CD8-positive, alpha-beta T cell (primary cell): ENCODE measurements at regions of chr17 and their contacts with region 1.

Region 1: DNA sequence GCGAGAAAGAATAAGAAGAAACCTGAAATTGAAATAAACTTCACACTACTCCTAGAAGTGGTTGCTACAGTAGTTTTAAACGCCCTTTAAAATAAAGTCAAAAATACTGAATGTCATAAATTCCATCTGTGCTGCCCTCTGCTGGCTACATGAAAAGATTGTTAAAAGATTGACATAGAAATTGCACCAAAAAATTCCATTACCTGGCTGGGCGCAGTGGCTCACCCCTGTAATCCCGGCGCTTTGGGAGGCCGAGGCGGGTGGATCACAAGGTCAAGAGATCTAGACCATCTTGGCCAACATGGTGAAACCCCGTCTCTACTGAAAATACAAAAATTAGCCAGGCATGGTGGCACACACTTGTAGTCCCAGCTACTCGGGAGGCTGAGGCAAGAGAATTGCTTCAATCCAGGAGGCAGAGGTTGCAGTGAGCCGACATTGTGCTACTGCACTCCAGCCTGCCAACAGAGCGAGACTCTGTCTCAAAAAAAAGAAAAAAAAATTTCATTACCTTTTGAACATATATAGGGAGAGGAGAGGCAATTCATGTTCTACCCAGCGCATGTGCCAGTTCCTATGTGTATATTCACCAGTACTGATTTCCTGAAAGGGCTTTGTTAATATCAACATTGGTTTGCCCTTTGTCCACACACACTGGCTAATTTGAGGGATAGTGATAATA is 36.5 kb downstream of the CYTH1 start:
- DNase-seq: peak in 6 of 9 experiments; percentile 40 to 80 (median 62)
- ATAC-seq: no peak
- H3K4me3 ChIP-seq: no peak overlapping the region
- H3K4me3 Mint-ChIP-seq: peak overlapping the region; percentile 63
- H3K27ac ChIP-seq: peak overlapping the region; percentile 2 to 84
- H3K27ac Mint-ChIP-seq: peak overlapping the region; percentile 91
- H3K4me1 ChIP-seq: peaks cover 95% of the 10 kb centered on the region
- H3K4me1 Mint-ChIP-seq: peaks cover 93% of the 10 kb centered on the region
- H3K27me3 ChIP-seq: no peaks in the 10 kb centered on the region
- H3K27me3 Mint-ChIP-seq: no peaks in the 10 kb centered on the region
- CTCF ChIP-seq: peak; percentile 87

Region 2: GRCh38 chr17:78723001-78723796 is 22.3 kb before region 1 on chr17:
- CTCF ChIA-PET with region 1: interaction called, 5 read pairs
- POLR2A ChIA-PET with region 1: interaction called, 11 read pairs
- intact Hi-C with region 1: no loop called
- DNase-seq: no peak
- ATAC-seq: no peak
- H3K4me3 ChIP-seq: no peak overlapping the region
- H3K4me3 Mint-ChIP-seq: peak overlapping the region; percentile 53
- H3K27ac ChIP-seq: peak overlapping the region in 1 of 2 experiments; percentile 52
- H3K27ac Mint-ChIP-seq: peak overlapping the region; percentile 70
- H3K4me1 ChIP-seq: peaks cover 97% of the 10 kb centered on the region
- H3K4me1 Mint-ChIP-seq: peaks cover 94% of the 10 kb centered on the region
- H3K27me3 ChIP-seq: no peaks in the 10 kb centered on the region
- H3K27me3 Mint-ChIP-seq: no peaks in the 10 kb centered on the region
- CTCF ChIP-seq: no peak

Region 3: DNA sequence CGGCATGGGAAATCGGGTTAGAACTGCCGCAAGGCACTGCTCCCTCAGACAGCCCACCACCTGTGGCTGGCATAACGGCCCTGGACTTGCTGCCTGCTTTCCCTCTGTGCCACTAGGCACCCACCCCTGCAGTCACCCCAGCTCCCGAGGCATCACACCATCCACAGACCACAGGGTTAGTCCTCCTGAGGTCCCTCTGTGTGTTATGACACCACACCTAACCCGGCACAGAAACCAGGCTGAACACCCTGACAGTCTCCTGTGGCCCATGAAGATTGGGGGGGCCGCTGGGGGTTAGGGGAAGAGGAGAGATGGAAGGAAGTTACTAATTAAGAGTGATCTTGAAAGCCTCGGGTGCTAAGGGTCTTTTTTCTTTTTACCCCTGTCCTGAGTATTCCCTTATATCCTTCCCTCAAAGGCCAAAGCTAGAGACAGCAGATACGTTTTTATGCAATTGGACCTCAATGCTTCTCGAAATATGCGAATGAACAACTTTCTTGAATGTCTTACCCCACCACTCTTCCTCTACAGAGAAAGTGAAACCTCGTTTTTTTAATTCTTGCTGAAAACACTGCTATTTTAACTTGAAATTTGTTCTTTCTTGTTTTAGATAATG is 29.5 kb after region 1 on chr17:
- CTCF ChIA-PET with region 1: interaction called, 18 read pairs
- POLR2A ChIA-PET with region 1: interaction called, 21 read pairs
- intact Hi-C with region 1: loop called (anchors 1 kb)
- DNase-seq: peak; percentile 35 to 85 (median 67)
- ATAC-seq: peak; percentile 41
- H3K4me3 ChIP-seq: peak overlapping the region; percentile 46 to 62
- H3K4me3 Mint-ChIP-seq: peak overlapping the region; percentile 88
- H3K27ac ChIP-seq: peak overlapping the region; percentile 55 to 82
- H3K27ac Mint-ChIP-seq: peak overlapping the region; percentile 96
- H3K4me1 ChIP-seq: peaks cover 81% of the 10 kb centered on the region
- H3K4me1 Mint-ChIP-seq: peaks cover 67% of the 10 kb centered on the region
- H3K27me3 ChIP-seq: no peaks in the 10 kb centered on the region
- H3K27me3 Mint-ChIP-seq: no peaks in the 10 kb centered on the region
- CTCF ChIP-seq: no peak

Region 4: GRCh38 chr17:78798695-78799559 is 53.4 kb after region 1 on chr17:
- CTCF ChIA-PET with region 1: interaction called, 10 read pairs
- POLR2A ChIA-PET with region 1: no interaction called
- intact Hi-C with region 1: no loop called
- DNase-seq: peak in 2 of 9 experiments; percentile 58 to 70
- ATAC-seq: peak; percentile 21
- H3K4me3 ChIP-seq: no peak overlapping the region
- H3K4me3 Mint-ChIP-seq: no peak overlapping the region
- H3K27ac ChIP-seq: peak overlapping the region in 1 of 2 experiments; percentile 0
- H3K27ac Mint-ChIP-seq: peak overlapping the region; percentile 80
- H3K4me1 ChIP-seq: peaks cover 21% of the 10 kb centered on the region
- H3K4me1 Mint-ChIP-seq: peaks cover 58% of the 10 kb centered on the region
- H3K27me3 ChIP-seq: no peaks in the 10 kb centered on the region
- H3K27me3 Mint-ChIP-seq: no peaks in the 10 kb centered on the region
- CTCF ChIP-seq: peak; percentile 41